Naive thymus-derived CD4-positive, alpha-beta T cell (primary cell): ENCODE measurements at regions of chr21 and their contacts with region 1.

Region 1: DNA sequence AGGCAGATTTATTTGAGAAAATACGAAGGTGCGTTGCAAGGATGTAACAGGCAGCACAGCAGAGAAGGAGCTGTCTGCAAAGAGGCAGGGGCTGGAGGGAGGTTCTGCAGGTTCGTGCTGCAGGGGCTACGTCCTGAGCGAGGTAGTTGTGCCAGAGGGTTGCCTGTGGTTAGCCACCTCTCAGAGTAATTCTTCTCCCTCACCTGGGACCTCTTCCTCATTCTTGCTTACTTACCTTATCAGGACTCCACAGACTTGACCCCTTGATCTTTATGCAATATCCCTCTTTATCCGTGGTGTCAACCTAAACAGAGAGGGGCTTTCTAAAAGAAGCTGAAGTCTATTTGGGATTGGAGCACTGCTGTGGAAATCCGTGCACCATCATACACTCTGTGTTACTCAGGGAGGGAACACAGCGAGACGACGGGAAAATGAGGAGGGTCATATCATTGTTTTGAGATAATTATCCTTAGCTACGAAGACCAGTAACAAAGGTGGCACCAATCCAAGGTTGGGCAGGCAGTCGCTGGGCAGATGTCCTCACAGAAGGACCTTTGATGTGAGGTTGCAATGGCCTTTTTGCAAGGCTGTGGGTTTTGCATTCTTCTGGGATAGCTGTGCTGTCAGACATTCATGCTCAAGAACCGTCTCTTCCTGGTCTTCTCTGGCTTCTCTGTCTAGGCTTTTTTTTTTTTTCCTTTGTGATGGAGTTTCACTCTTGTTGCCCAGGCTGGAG is 82.8 kb downstream of the WDR4 start:
- DNase-seq: no peak
- ATAC-seq: no peak
- H3K4me3 ChIP-seq: no peak overlapping the region
- H3K4me3 Mint-ChIP-seq: no peak overlapping the region
- H3K27ac ChIP-seq: no peak overlapping the region
- H3K27ac Mint-ChIP-seq: no peak overlapping the region
- H3K4me1 ChIP-seq: no peaks in the 10 kb centered on the region
- H3K4me1 Mint-ChIP-seq: peaks cover 0 to 7% (median 3%) of the 10 kb centered on the region in 7 donors
- H3K27me3 ChIP-seq: no peaks in the 10 kb centered on the region
- H3K27me3 Mint-ChIP-seq: peaks cover 0 to 25% (median 0%) of the 10 kb centered on the region in 5 donors

Region 2: DNA sequence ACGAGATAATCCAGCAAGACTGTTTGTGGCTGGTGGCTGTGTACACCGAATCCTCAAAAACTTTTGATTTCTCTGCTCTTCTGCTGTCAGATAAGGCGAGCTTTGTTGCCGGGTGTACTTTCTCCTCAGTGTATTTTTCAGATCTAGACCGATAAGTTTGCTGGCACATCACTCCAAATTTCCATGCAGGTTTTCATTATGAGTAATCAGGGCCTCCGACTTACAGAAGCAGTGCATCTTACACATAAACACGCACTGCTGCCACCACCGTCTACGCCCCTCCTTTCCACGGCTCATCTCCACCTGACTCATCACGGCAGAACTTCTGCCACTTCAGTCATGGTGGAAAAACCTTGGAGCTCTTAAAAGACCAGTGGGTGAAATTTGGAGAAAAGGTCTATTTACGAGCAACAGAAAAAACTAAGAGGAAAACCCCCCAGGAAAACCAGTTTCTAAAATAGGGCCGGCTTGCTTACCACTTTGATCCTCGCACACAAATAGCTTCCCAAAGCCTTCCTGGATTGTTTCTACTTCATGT is 794.0 kb before region 1 on chr21:
- CTCF ChIA-PET with region 1: interaction called, 11 read pairs
- POLR2A ChIA-PET with region 1: no interaction called
- intact Hi-C with region 1: no loop called
- DNase-seq: peak in 4 of 9 donors; percentile 30 to 73 (median 57)
- ATAC-seq: peak; percentile 66
- H3K4me3 ChIP-seq: no peak overlapping the region
- H3K4me3 Mint-ChIP-seq: peak overlapping the region; percentile 33 to 82 (median 68)
- H3K27ac ChIP-seq: no peak overlapping the region
- H3K27ac Mint-ChIP-seq: peak overlapping the region; percentile 19 to 91 (median 80)
- H3K4me1 ChIP-seq: peaks cover 6 to 14% of the 10 kb centered on the region in 2 donors
- H3K4me1 Mint-ChIP-seq: peaks cover 27 to 55% (median 42%) of the 10 kb centered on the region in 7 donors
- H3K27me3 ChIP-seq: no peaks in the 10 kb centered on the region
- H3K27me3 Mint-ChIP-seq: no peaks in the 10 kb centered on the region